ENCODE measurements at regions of chr2 and their contacts with region 1.

Region 1: GRCh38 chr2:53970724-53971602 is at the start of gene PSME4:
- DNase-seq: peak; percentile 95
- H3K4me3 Mint-ChIP-seq: peak within 1 kb of the TSS; percentile 83
- H3K27ac Mint-ChIP-seq: peak within 1 kb of the TSS; percentile 86
- H3K4me1 Mint-ChIP-seq: peaks cover 38% of the 10 kb centered on the region
- H3K27me3 Mint-ChIP-seq: no peaks in the 10 kb centered on the region
- total RNA-seq, gene PSME4: 31.5 to 38.8 TPM

Region 2: DNA sequence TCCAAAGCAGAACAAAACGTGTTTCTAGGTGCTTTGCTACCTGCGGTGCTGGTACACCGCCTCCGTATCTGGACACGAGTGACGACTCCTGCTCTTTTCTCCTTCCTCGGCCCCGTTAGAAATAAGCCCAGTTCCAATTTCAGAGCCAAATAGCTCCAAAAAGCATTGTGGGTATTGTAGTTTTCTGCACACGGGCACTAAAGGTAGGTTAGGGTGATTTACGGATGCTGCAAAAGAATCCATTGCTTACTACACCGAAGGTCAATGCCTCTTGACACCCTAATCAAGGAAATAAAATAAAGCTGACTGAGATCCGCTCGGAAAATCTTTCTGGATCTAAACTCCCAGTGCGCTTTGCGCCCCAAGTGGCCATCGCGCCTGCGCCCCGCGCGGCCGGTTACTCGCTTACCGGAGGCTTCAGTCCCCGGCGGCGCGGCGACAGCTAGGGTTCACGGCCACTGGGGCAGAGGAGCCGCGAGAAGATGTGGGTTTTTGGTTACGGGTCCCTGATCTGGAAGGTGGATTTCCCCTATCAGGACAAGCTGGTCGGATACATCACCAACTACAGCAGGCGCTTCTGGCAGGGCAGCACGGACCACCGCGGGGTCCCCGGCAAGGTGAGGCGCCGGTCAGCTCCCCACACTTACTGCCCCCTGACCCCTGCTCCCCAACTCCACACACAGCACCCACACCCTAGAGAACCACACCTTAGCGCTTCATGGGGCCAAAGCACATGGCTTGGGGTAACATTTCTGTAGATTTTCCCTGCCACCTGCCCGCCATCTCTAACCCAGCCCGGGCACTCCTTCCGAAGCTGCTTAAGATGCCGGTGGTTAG is 203.3 kb before region 1 on chr2 and contains the start of gene CHAC2:
- CTCF ChIA-PET with region 1: interaction called, 3 read pairs
- intact Hi-C with region 1: loop called (anchors 1 kb)
- DNase-seq: peak; percentile 91
- H3K4me3 Mint-ChIP-seq: peak within 1 kb of the TSS; percentile 94
- H3K27ac Mint-ChIP-seq: peak within 1 kb of the TSS; percentile 93
- H3K4me1 Mint-ChIP-seq: peaks cover 26% of the 10 kb centered on the region
- H3K27me3 Mint-ChIP-seq: no peaks in the 10 kb centered on the region
- total RNA-seq, gene CHAC2: 11.5 to 12.4 TPM

Region 3: DNA sequence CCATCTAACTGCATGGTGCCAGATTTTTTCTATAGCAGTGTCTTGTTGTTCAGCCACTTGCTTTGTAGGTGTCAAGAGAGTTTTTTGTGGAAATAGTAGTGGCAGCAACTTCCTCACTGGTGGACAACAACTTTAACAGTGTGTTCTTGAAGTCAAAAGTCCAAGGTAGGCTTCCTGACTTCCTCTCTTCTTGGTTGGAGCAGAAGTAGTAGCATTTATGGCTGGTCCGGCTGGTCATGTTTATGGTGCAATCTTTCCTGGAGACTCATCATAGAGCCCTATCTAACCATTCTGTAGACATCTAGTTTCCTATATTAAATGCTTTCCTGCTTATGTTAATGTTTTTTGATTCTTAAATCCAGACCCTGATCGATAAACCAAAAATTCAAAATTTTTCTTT is 122.9 kb before region 1 on chr2:
- CTCF ChIA-PET with region 1: no interaction called
- intact Hi-C with region 1: no loop called
- DNase-seq: no peak
- H3K4me3 Mint-ChIP-seq: no peak overlapping the region
- H3K27ac Mint-ChIP-seq: no peak overlapping the region
- H3K4me1 Mint-ChIP-seq: peaks cover 2% of the 10 kb centered on the region
- H3K27me3 Mint-ChIP-seq: no peaks in the 10 kb centered on the region

Region 4: DNA sequence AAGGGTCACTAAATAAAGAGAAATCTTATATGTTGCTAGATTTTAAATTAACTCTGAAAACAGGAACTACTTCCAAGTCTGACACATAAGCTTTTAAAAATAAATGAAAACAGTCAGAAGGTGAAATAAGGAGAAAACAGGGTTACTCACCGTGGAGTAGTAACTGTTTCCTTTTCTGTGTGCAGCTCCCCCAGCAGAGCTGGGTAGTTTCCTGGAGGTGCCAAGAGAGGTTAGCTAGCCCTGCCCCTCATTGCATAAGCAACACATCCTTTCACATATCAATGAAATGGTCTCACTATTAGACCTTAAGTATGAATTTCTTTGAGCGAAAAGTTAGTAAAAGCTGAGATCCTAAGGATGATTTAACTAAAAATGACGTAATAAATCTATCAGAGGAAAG is 57.2 kb before region 1 on chr2:
- CTCF ChIA-PET with region 1: no interaction called
- intact Hi-C with region 1: loop called (anchors 1 kb)
- DNase-seq: peak; percentile 69
- H3K4me3 Mint-ChIP-seq: no peak overlapping the region
- H3K27ac Mint-ChIP-seq: peak overlapping the region; percentile 66
- H3K4me1 Mint-ChIP-seq: peaks cover 15% of the 10 kb centered on the region
- H3K27me3 Mint-ChIP-seq: no peaks in the 10 kb centered on the region

Region 5: GRCh38 chr2:53994818-53995808 is 24.1 kb after region 1 on chr2:
- CTCF ChIA-PET with region 1: no interaction called
- intact Hi-C with region 1: loop called (anchors 1 kb)
- DNase-seq: no peak
- H3K4me3 Mint-ChIP-seq: peak overlapping the region; percentile 64
- H3K27ac Mint-ChIP-seq: peak overlapping the region; percentile 85
- H3K4me1 Mint-ChIP-seq: peaks cover 28% of the 10 kb centered on the region
- H3K27me3 Mint-ChIP-seq: no peaks in the 10 kb centered on the region

Region 6: GRCh38 chr2:54041135-54041534 is 70.2 kb after region 1 on chr2:
- CTCF ChIA-PET with region 1: no interaction called
- intact Hi-C with region 1: loop called (anchors 1 kb)
- DNase-seq: peak; percentile 73
- H3K4me3 Mint-ChIP-seq: no peak overlapping the region
- H3K27ac Mint-ChIP-seq: no peak overlapping the region
- H3K4me1 Mint-ChIP-seq: no peaks in the 10 kb centered on the region
- H3K27me3 Mint-ChIP-seq: no peaks in the 10 kb centered on the region

Region 7: DNA sequence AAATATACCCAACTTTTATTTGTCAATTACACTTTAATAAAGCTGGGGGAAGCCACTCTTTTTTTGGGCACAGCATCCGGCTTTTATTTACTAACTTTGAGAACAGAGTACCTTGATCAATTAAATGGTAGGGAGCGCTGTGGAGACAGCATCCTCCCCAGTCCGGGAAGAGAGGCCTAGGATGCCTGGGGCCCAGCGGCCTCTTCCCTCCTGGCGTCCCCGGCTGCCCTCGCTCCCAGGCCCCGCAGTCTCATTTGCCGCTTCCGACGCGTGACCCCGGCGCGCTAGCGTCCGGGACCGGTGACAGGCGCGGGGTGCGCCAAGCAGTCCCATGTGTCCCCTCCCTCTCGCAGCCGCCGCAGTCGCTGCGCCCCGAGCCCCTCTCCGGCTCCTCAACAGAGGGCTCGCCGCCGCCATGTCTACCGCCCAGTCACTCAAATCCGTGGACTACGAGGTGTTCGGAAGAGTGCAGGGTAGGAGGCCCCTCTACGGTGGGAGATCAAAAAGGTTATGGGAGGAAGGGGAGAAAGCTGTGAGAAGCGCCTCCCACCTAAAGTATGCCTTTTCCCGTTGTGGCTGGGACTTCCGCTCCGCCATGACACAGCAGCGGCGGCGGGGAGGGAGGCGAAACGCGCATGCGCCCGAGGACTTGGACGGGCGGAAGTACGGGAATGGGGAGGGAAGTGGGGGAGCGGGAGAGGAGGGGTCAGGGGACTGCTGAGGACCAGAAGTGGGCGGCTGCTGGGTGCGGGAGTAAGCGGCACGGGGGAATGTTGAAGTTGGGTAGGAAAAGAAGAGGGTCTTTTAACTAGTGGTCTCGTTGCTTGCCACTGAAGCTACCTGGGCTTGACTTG is 144.5 kb after region 1 on chr2 and contains the start of gene ACYP2:
- CTCF ChIA-PET with region 1: no interaction called
- intact Hi-C with region 1: loop called (anchors 1 kb)
- DNase-seq: peak; percentile 95
- H3K4me3 Mint-ChIP-seq: peak within 1 kb of the TSS; percentile 97
- H3K27ac Mint-ChIP-seq: peak within 1 kb of the TSS; percentile 100
- H3K4me1 Mint-ChIP-seq: peaks cover 11% of the 10 kb centered on the region
- H3K27me3 Mint-ChIP-seq: no peaks in the 10 kb centered on the region
- total RNA-seq, gene ACYP2: 6.8 to 7.3 TPM